Left colon (tissue), 2 donors: ENCODE measurements at regions of chr10 and their contacts with region 1.

Region 1: DNA sequence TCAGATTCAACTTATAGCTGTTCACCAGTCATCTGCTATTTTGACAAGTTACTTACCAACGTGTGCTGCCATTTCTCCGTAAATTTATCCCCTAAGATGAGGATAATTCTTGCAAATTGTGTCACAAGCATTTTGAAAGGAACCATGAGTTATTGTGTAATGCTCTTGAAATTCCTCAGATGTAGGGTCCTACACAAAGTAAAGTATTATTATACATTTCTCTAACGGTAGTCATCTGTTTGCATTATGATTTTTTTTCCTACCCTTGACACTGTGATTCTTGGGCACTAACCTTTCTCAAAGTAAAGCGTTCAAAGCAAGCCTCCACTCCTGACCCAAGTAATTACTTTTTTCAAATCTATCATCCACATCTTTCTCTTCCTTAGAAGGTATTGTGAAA is 8.1 kb downstream of the HERC4 start:
- DNase-seq: no peak
- ATAC-seq: no peak

Region 2: DNA sequence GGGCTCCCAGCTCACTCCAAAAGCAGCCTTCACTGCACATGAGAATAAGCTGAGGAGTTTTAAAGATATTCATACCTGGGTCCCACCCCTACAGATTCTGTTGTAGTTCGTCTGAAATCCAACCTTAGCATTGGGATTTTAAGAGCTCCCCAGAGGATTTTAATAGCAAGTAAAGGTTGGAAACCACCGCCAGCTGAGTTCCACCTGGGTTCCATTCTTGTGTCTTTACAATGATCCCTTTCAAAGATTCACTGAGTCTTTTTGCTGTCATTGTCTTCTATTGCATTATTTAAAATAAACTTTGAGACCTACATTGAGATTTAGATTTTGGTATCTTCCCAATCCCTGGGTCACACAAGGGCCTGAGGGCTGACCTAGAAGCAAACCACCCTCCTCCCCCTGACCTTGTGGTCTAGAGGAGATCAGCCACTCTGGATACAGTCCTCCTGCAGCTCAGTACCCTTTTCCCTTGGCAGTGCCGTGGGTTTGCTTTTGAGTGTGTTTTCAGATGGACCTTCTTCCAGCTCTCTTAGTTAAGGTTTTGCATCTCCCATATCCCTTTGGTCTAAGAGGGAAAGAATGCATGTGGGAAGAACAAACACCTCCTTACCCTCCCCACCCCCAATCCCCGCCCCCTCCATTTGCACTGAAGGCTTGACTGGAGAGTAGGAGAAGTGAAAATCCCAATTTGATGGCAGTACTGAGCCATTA is 205.1 kb before region 1 on chr10:
- intact Hi-C with region 1: loop called in 1 of 2 experiments (anchors 10 kb)
- DNase-seq: no peak
- ATAC-seq: no peak

Region 3: GRCh38 chr10:67936416-67936815 is 130.6 kb before region 1 on chr10:
- intact Hi-C with region 1: no loop called
- DNase-seq: no peak
- ATAC-seq: no peak